ENCODE measurements at regions of chr17 and their contacts with region 1.

Region 1: GRCh38 chr17:34146440-34147043 is 108.5 kb upstream of the CCL2 start:
- DNase-seq: peak; percentile 13
- H3K4me3 ChIP-seq: no peak overlapping the region
- H3K27ac ChIP-seq: no peak overlapping the region
- H3K4me1 ChIP-seq: no peaks in the 10 kb centered on the region
- H3K27me3 ChIP-seq: no peaks in the 10 kb centered on the region
- CTCF ChIP-seq: peak; percentile 88 to 93 (median 88)

Region 2: GRCh38 chr17:33686171-33686570 is 460.4 kb before region 1 on chr17:
- dilution Hi-C with region 1: no loop called
- DNase-seq: no peak
- H3K4me3 ChIP-seq: no peak overlapping the region
- H3K27ac ChIP-seq: no peak overlapping the region
- H3K4me1 ChIP-seq: no peaks in the 10 kb centered on the region
- H3K27me3 ChIP-seq: no peaks in the 10 kb centered on the region
- CTCF ChIP-seq: peak; percentile 44 to 51 (median 47)

Region 3: GRCh38 chr17:33779225-33779591 is 367.3 kb before region 1 on chr17:
- dilution Hi-C with region 1: loop called (anchors 25 kb)
- DNase-seq: peak; percentile 2
- H3K4me3 ChIP-seq: no peak overlapping the region
- H3K27ac ChIP-seq: no peak overlapping the region
- H3K4me1 ChIP-seq: no peaks in the 10 kb centered on the region
- H3K27me3 ChIP-seq: no peaks in the 10 kb centered on the region
- CTCF ChIP-seq: peak; percentile 68 to 86 (median 68)

Region 4: GRCh38 chr17:33964344-33964979 is 182.1 kb before region 1 on chr17:
- dilution Hi-C with region 1: loop called (anchors 25 kb)
- DNase-seq: no peak
- H3K4me3 ChIP-seq: no peak overlapping the region
- H3K27ac ChIP-seq: no peak overlapping the region
- H3K4me1 ChIP-seq: no peaks in the 10 kb centered on the region
- H3K27me3 ChIP-seq: no peaks in the 10 kb centered on the region
- CTCF ChIP-seq: peak; percentile 22 to 29 (median 26)